PC-9 (cell line): ENCODE measurements at regions of chr5 and their contacts with region 1.

Region 1: GRCh38 chr5:135426102-135427082 is 20.8 kb downstream of the DCANP1 start:
- DNase-seq: peak in 1 of 2 experiments; percentile 48
- H3K4me3 ChIP-seq: no peak overlapping the region
- H3K27ac ChIP-seq: no peak overlapping the region
- H3K4me1 ChIP-seq: no peaks in the 10 kb centered on the region
- H3K27me3 ChIP-seq: peaks cover 29% of the 10 kb centered on the region
- CTCF ChIP-seq: peak; percentile 80

Region 2: DNA sequence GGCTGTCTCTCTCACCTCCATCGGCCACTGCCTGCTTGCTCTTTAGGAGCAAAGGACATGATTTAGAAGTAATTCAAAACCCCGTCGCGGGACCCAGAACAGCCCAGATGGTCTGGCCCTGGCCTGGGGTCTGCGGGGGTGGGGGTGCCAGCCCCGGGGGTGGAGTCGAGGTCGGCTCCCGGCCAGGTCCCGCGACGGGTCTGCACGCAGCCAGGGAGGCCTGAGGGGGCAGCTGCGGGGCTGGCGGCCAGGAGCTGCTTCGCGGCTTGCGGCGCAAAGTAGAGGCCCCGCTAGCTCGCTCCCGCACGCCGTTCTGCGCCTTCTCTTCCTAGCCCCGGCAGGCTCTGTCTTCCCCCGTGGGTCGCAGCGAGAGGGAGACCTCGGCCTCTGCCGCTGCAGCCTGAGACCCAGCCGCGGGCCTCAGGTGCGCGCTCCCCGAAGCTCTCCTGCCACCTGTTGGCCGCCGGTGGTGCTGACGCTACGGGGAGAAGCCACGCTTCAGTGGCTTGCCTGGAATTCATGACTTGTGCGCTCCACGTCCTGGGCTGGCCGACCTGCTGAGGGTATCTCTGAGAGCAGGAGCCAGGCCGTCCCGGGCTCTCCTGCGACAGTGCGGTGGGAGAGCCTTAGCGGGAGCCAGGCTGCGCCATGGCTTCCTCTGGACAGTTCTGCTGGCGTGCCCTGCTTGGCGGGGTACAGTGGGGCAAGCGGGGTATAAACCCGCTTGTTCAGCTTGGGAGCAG is 235.1 kb before region 1 on chr5:
- CTCF ChIA-PET with region 1: no interaction called
- POLR2A ChIA-PET with region 1: no interaction called
- intact Hi-C with region 1: no loop called
- DNase-seq: peak; percentile 70 to 86
- H3K4me3 ChIP-seq: peak overlapping the region; percentile 59
- H3K27ac ChIP-seq: no peak overlapping the region
- H3K4me1 ChIP-seq: peaks cover 24% of the 10 kb centered on the region
- H3K27me3 ChIP-seq: no peaks in the 10 kb centered on the region
- CTCF ChIP-seq: peak; percentile 94

Region 3: GRCh38 chr5:135356522-135357318 is 69.7 kb before region 1 on chr5:
- CTCF ChIA-PET with region 1: no interaction called
- POLR2A ChIA-PET with region 1: no interaction called
- intact Hi-C with region 1: loop called (anchors 10 kb)
- DNase-seq: no peak
- H3K4me3 ChIP-seq: no peak overlapping the region
- H3K27ac ChIP-seq: no peak overlapping the region
- H3K4me1 ChIP-seq: no peaks in the 10 kb centered on the region
- H3K27me3 ChIP-seq: no peaks in the 10 kb centered on the region
- CTCF ChIP-seq: no peak

Region 4: GRCh38 chr5:135410348-135410747 is 16.0 kb before region 1 on chr5:
- CTCF ChIA-PET with region 1: no interaction called
- POLR2A ChIA-PET with region 1: no interaction called
- intact Hi-C with region 1: no loop called
- DNase-seq: no peak
- H3K4me3 ChIP-seq: no peak overlapping the region
- H3K27ac ChIP-seq: no peak overlapping the region
- H3K4me1 ChIP-seq: no peaks in the 10 kb centered on the region
- H3K27me3 ChIP-seq: peaks cover 4% of the 10 kb centered on the region; the same call in 1 of the 2 replicates
- CTCF ChIP-seq: no peak

Region 5: DNA sequence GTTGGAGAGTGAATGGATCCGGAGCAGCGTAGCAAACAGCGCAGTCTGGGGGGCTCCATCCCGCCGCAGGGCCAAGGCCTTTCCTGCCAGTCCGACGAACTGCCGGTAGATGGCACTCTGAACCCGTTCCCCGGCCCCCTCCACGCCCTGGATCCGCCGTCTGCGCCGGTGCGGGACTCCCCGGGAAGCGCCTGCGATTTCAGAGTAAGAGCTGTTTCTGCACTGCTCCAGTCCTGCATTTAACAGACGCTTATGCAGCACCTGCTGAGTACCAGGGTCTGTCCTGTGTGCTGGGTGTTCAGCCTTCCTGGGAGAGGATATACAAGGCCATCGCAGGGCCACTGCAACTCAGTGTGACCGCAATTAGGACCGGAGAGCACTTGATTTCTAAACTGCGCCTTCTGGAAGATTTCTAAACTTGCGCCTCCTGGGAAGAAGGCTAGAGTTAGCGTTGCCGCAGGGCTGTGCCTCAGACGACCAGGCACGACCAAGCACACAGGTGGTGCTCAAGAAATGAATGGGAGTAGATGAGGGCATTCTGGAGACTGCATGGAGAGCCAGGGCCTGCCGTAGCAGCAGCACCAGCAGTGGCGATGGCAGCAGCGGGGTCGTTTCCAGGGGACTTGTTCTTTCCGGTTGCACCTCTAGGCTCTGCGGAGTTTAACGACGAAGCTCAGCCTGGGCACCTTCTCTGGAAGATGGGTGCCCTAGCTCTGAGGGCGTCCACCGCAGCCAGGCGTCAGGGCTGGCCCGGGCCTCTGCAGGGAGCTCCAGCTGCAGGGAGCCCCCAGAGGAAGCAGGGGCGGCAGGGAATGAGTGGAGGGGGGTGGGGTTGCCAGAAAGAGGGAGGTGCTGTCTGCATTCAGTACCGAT is 40.0 kb after region 1 on chr5:
- CTCF ChIA-PET with region 1: no interaction called
- POLR2A ChIA-PET with region 1: no interaction called
- intact Hi-C with region 1: no loop called
- DNase-seq: peak in 1 of 2 experiments; percentile 71
- H3K4me3 ChIP-seq: no peak overlapping the region
- H3K27ac ChIP-seq: no peak overlapping the region
- H3K4me1 ChIP-seq: no peaks in the 10 kb centered on the region
- H3K27me3 ChIP-seq: peaks cover 95% of the 10 kb centered on the region
- CTCF ChIP-seq: peak; percentile 76